ENCODE measurements at regions of chr9 and their contacts with region 1.

Region 1: GRCh38 chr9:107794259-107794658 is 304.7 kb upstream of the KLF4 start:
- DNase-seq: no peak
- H3K4me3 ChIP-seq: no peak overlapping the region
- H3K27ac ChIP-seq: no peak overlapping the region
- H3K4me1 ChIP-seq: no peaks in the 10 kb centered on the region
- H3K27me3 ChIP-seq: no peaks in the 10 kb centered on the region
- CTCF ChIP-seq: no peak
- EP300 ChIP-seq: no peak
- POLR2A ChIP-seq: no peak

Region 2: DNA sequence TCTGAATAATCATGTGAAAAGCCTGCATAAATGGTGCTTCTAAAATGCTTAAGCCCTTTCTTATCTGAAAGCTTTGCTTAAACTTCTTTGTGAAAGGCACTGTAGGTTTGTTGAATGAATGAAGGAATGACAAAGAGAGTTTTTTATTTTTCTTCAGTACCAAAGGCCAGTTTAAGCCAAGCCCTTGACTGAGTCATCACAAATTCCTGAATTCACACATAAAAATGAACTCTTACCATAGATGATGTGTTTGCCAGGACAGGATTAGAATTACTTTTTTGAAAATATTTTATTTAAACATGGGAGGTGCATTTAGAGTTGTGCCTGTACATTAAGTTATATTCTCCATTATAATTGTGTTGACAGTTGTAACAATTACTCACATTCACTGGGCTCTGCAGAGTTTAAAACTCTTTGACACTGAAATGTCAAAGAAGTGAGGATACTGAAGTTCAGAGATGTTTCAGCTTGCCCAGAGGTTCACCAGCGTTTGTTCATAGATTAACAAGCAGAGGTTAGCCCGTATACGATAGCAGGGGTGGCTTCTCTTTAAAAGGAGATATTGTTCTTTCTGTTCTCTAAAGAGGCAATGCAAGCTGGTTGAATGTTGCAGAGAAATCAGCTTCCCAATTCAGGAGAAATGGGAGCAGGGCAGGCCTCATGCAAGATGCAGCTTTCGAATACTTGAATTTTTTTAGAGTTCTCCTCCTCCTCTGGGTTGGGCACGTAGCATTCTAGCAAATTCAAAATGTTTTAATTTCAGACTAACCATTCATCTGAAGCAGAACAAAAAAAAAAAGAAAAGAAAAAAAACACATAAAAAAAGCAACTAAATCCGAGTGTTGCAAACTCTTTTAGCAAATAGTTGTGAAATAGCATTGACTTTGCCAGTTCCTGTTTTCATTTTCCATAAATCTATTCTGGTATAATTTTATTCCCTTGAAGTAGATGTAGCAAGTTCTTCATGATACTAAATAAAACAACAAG is 54.0 kb after region 1 on chr9:
- intact Hi-C with region 1: loop called in 1 of 4 experiments (anchors 10 kb)
- DNase-seq: no peak
- H3K4me3 ChIP-seq: no peak overlapping the region
- H3K27ac ChIP-seq: no peak overlapping the region
- H3K4me1 ChIP-seq: peaks cover 3% of the 10 kb centered on the region
- H3K27me3 ChIP-seq: no peaks in the 10 kb centered on the region
- CTCF ChIP-seq: no peak
- EP300 ChIP-seq: no peak
- POLR2A ChIP-seq: no peak